ENCODE measurements at regions of chr22 and their contacts with region 1.

Region 1: DNA sequence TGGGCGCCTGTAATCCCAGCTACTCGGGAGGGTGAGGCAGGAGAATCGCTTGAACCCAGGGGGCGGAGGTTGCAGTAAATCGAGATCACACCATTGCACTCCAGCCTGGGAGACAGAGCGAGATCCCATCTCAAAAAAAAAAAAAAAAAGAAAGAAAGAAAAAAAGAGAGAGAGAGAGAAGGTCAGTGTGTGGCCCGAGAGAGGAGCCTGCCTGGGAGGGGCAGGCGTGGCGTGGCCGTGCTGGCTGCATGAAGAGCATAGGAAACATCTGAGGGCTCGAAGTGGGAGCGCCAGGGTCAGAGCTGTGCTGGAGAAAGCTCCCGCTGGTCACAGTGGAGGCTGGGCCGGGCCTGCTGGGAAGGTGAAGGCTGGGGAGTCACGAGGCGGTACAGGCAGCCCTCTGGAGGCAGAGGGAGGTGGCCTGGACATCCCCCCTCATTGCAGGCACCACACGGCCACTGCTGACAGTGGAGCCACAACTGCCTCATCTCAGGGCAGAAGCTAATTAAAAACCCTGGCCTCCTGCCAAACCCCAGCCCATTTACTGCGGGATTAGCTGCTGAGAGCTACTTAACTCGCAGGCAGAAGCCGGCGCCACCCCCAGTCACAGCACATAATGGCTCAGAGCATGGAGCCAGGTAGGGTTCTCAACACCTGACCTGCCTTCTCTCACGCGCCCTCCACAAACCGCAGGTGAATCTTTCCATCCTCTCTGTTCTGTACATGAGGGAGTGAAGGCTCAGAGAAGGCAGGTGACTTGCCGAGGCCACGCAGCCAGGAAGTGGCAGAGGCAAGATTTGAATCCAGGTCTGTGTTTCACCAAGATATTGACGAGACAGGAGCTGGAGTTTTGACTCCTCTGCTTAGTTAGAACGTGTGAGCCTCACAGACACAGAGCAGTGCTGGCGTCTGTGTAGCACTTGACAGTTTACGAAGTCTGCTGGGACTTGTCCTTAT is 32.6 kb downstream of the NFAM1 start:
- DNase-seq: no peak
- H3K4me3 ChIP-seq: no peak overlapping the region
- H3K27ac ChIP-seq: no peak overlapping the region
- H3K4me1 ChIP-seq: no peaks in the 10 kb centered on the region
- H3K27me3 ChIP-seq: no peaks in the 10 kb centered on the region
- CTCF ChIP-seq: no peak
- POLR2A ChIP-seq: no peak

Region 2: DNA sequence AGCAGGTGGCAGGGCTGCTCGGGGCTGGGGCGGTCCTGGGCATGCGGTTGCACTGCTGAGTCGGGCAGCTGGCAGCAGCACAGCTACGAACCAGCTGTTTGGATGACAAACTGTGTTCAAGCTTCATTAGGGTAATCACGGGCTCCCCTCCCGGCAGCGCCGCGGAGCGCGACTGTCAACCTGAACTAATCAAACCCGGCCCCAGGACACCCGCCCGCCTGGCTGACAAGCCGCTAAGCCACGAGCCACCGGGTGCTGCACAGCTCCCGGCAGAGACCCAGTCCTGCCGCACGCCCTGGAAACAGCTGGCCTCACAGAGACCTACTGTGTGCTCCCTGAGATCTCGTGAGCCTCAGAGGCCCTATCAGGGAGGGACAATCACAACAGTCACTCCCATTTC is 68.6 kb before region 1 on chr22:
- intact Hi-C with region 1: loop called (anchors 10 kb)
- DNase-seq: no peak
- H3K4me3 ChIP-seq: no peak overlapping the region
- H3K27ac ChIP-seq: no peak overlapping the region
- H3K4me1 ChIP-seq: no peaks in the 10 kb centered on the region
- H3K27me3 ChIP-seq: no peaks in the 10 kb centered on the region
- CTCF ChIP-seq: no peak
- POLR2A ChIP-seq: no peak

Measured in prostate gland (tissue), 2 donors.